ENCODE measurements at regions of chr12 and their contacts with region 1.

Region 1: DNA sequence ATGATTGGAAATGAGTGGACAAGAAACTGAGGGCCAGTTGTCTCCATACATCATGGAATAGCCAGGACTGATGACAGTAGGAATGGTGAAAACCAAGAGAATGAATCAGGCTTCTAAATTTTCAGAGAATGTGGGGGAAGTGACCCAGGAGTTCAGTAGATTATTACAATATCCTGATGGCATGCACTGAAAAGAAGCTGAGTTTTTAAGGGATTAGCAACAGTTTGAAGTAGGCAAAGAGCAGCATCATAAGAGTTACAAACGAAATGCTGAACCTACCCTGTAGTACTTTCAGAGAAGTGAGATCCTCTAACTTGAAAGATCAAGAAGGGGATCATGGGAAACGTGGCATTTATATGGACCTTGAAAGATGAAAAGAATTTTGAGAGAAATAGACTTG is 13.2 kb downstream of the SLC2A14 start:
- DNase-seq: no peak
- H3K4me3 Mint-ChIP-seq: no peak overlapping the region
- H3K27ac Mint-ChIP-seq: no peak overlapping the region
- H3K4me1 Mint-ChIP-seq: peaks cover 8% of the 10 kb centered on the region
- H3K27me3 Mint-ChIP-seq: peaks cover 37% of the 10 kb centered on the region
- CTCF ChIP-seq: no peak

Region 2: GRCh38 chr12:6052940-6053329 is 1806.6 kb before region 1 on chr12:
- CTCF ChIA-PET with region 1: interaction called, 11 read pairs
- intact Hi-C with region 1: no loop called
- DNase-seq: no peak
- H3K4me3 Mint-ChIP-seq: no peak overlapping the region
- H3K27ac Mint-ChIP-seq: no peak overlapping the region
- H3K4me1 Mint-ChIP-seq: no peaks in the 10 kb centered on the region
- H3K27me3 Mint-ChIP-seq: peaks cover 18% of the 10 kb centered on the region
- CTCF ChIP-seq: no peak

Region 3: DNA sequence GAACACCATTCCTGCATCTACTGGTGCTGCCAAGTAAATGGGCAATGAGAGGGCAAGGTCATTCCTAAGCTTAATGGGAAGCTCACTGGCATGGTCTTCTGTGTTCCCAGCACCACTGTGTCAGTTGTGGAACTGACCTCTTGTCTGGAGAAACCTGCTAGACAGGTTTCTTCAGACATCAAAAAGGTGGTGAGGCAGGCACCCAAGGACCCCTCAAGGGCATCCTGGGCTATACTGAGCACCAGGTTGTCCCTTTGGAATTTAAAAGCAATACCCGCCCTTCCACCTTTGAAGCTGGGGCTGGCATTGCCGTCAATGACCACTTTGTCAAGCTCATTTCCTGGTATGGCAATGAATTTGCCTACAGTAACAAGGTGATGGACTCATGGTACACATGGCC is 292.6 kb before region 1 on chr12:
- CTCF ChIA-PET with region 1: no interaction called
- intact Hi-C with region 1: no loop called
- DNase-seq: no peak
- H3K4me3 Mint-ChIP-seq: no peak overlapping the region
- H3K27ac Mint-ChIP-seq: no peak overlapping the region
- H3K4me1 Mint-ChIP-seq: peaks cover 19% of the 10 kb centered on the region
- H3K27me3 Mint-ChIP-seq: no peaks in the 10 kb centered on the region
- CTCF ChIP-seq: no peak

Region 4: GRCh38 chr12:7995266-7995963 is 135.9 kb after region 1 on chr12:
- CTCF ChIA-PET with region 1: no interaction called
- intact Hi-C with region 1: loop called (anchors 1 kb)
- DNase-seq: peak; percentile 66
- H3K4me3 Mint-ChIP-seq: no peak overlapping the region
- H3K27ac Mint-ChIP-seq: no peak overlapping the region
- H3K4me1 Mint-ChIP-seq: peaks cover under 1% of the 10 kb centered on the region
- H3K27me3 Mint-ChIP-seq: no peaks in the 10 kb centered on the region
- CTCF ChIP-seq: peak; percentile 60

Region 5: DNA sequence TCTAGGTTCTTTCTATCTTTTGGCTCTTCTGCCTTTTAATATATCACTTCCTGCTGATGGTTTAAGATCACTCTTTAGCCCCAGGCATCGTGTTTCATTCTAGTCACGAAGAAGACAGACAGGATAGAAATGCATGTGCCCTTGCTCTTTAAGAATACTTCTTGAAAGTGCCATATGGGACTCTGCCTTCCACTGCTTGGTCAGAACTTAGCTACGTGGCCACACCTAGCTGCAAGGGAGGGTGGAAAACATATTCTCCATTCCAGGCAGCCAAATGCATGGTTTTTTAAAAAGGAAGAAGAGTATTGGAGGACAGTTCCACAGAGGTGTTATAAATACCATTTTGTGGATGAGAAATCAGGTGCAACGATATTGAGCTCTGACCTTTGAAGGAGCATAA is 1604.9 kb after region 1 on chr12:
- CTCF ChIA-PET with region 1: no interaction called
- intact Hi-C with region 1: no loop called
- DNase-seq: no peak
- H3K4me3 Mint-ChIP-seq: no peak overlapping the region
- H3K27ac Mint-ChIP-seq: no peak overlapping the region
- H3K4me1 Mint-ChIP-seq: no peaks in the 10 kb centered on the region
- H3K27me3 Mint-ChIP-seq: no peaks in the 10 kb centered on the region
- CTCF ChIP-seq: no peak